ENCODE measurements at regions of chr2 and their contacts with region 1.

Region 1: DNA sequence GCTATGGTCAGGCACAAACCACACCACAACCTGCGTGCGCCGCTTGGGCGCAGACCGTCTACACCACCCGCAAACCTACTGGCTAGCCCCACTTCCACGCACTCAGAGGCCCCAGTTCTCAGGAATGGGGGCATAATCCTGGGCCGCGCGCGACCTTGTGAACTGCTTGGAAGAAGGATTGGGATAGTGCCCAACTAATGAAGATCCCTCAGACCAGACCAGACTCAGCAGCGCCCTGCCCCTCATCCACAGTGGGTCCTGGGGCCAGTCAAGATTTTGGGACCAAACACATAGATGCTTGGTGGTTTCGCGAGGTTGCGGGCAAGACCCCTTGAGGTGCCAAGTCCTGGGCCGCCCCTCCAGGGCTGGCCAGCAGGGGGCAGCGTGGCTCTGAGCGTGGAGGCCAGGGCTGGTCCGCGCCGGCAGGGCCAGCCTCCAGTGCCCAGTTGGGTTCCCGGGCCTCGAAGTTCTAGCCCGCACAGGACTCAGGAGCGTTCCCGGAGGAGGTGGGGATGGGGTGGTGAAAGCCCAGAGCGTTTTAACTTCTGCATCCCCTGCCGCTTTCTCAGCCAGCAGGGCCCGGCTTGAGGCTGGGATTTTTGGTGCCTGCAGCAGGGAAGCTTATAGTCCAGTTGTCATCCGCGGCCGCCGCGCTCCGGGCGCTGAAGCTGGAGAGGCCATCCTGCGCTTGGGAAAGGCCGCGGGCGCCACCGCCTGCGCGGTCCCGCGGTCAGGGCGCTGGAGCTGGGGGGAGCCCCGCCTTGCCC is 8.3 kb downstream of the OSR1 start:
- DNase-seq: peak; percentile 40 to 72 (median 65)
- H3K4me3 ChIP-seq: peak overlapping the region in 1 of 4 donors; percentile 33
- H3K27ac ChIP-seq: no peak overlapping the region
- H3K4me1 ChIP-seq: peaks cover 11 to 12% of the 10 kb centered on the region in 2 donors
- H3K27me3 ChIP-seq: peaks cover 35% of the 10 kb centered on the region
- CTCF ChIP-seq: peak; percentile 56 to 78 (median 68)
- POLR2A ChIP-seq: no peak

Region 2: GRCh38 chr2:18976168-18976961 is 373.7 kb before region 1 on chr2:
- intact Hi-C with region 1: loop called in 1 of 2 experiments (anchors 10 kb)
- DNase-seq: peak in 3 of 7 donors; percentile 33 to 50 (median 34)
- H3K4me3 ChIP-seq: no peak overlapping the region
- H3K27ac ChIP-seq: peak overlapping the region in 2 of 5 donors; percentile 23 to 56
- H3K4me1 ChIP-seq: peaks cover 12 to 28% of the 10 kb centered on the region in 2 donors
- H3K27me3 ChIP-seq: no peaks in the 10 kb centered on the region
- CTCF ChIP-seq: no peak
- POLR2A ChIP-seq: no peak

Region 3: DNA sequence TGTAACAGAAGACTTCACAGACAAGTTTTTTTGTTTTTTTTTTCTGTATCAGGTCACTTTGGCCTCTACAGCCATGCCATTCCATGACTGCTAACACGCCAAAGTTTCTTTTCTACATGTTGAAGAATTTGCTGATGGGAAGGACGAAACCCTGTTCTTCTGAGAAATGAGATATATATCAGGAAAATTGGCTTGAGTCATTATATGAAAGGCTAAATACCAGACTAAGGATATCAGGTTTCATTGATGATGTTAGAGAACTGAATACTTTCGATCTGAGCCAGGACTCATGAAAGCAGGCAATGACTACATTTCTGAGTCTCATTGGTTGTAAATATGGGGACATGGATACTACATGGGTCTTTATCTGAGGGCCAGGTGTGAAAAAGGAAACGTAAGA is 173.1 kb before region 1 on chr2:
- intact Hi-C with region 1: loop called in 1 of 2 experiments (anchors 10 kb)
- DNase-seq: no peak
- H3K4me3 ChIP-seq: no peak overlapping the region
- H3K27ac ChIP-seq: no peak overlapping the region
- H3K4me1 ChIP-seq: no peaks in the 10 kb centered on the region
- H3K27me3 ChIP-seq: no peaks in the 10 kb centered on the region
- CTCF ChIP-seq: no peak
- POLR2A ChIP-seq: no peak

Region 4: DNA sequence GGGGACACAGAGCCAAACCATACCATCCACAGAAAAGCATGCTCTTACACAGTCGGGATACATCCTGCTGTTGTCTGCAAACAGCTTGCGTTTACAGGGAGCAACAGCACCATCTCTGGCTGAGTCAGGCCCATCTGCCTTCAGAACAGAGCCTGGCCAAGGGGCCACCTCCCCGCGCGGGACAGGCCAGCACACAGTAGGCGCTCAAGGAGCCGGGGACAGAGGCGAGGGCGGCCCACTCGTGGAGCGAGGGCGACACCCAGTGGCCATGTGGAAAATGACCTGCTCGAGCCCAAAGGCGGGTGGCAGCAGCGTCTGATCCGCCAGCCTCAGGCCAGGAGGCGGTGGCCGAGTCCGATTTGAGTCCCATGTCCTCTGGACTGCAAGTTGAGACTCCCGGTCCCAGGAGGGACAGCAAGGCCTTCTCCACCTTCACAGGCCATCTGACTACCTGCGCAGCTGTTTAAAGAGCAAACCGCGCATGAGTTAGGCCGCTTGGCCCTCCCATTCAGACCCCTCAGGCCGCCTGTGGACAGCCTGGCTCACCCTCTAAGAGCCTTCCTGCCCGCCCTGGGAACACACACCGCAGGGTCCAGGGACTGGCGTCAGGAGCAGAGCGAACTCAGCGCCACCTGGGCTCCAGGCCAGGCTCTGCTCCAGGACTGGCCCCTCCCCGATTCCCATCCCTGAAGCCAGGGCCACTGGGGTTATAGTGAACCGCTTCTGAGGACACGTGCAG is 513.4 kb after region 1 on chr2:
- intact Hi-C with region 1: loop called in 1 of 2 experiments (anchors 10 kb)
- DNase-seq: peak; percentile 60 to 81 (median 73)
- H3K4me3 ChIP-seq: peak overlapping the region in 1 of 4 donors; percentile 8
- H3K27ac ChIP-seq: no peak overlapping the region
- H3K4me1 ChIP-seq: peaks cover 4 to 8% of the 10 kb centered on the region in 2 donors
- H3K27me3 ChIP-seq: no peaks in the 10 kb centered on the region
- CTCF ChIP-seq: peak; percentile 95 to 99 (median 96)
- POLR2A ChIP-seq: no peak

Measured in adrenal gland (tissue), 19 donors.